ENCODE measurements at regions of chr3 and their contacts with region 1.

Region 1: DNA sequence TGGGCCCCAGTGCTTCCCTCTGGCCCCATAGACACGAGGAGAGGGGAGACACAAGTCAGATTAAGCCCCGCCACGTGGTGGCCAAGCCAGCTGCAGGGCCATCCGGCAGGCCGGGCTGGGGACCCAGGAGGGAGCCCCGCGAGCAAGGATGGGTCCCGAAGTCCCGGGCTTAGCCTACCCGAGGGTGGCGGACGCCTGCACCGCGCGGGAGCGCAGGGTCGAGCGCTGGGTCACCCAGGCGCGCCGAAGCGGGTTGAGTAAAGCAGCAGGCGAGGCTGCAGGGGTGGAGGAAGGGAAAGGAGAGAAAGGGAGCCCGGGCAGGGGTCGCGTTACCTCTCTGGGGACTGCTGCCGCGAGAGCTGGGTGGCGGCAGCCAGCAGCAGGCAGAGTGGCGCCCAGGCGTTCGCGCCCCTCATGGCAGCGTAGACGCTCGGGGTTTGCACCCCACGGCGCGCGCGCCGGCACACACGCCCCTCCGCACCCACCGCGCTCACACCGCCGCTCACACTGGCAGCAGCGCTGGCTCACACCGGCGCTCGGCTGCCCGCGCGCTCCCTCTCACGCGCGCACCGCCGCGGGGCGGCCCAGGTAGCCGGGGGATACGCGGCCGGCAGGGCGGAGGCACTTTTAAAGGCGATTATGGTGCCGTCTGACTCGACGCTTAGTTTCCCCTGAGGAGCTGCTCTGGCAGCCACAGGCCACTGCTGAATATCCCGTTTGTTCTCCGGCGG is at the start of gene PCOLCE2:
- DNase-seq: peak; percentile 16
- H3K4me3 ChIP-seq: peak within 1 kb of the TSS; percentile 25 to 64 (median 40)
- H3K27ac ChIP-seq: no peak within 1 kb of the TSS
- H3K4me1 ChIP-seq: peaks cover 8% of the 10 kb centered on the region
- H3K27me3 ChIP-seq: peaks cover 32 to 48% of the 10 kb centered on the region in 2 experiments
- CTCF ChIP-seq: no peak
- POLR2A ChIP-seq: no peak
- total RNA-seq, gene PCOLCE2: not detected in 2 replicates

Region 2: GRCh38 chr3:142963516-142964448 is 75.1 kb after region 1 on chr3 and contains the start of gene PAQR9:
- CTCF ChIA-PET with region 1: no interaction called
- POLR2A ChIA-PET with region 1: no interaction called
- dilution Hi-C with region 1: no loop called
- intact Hi-C with region 1: loop called (anchors 5 kb)
- DNase-seq: no peak
- H3K4me3 ChIP-seq: peak within 1 kb of the TSS; percentile 33 to 52 (median 35)
- H3K27ac ChIP-seq: no peak within 1 kb of the TSS
- H3K4me1 ChIP-seq: no peaks in the 10 kb centered on the region
- H3K27me3 ChIP-seq: peaks cover 48 to 79% of the 10 kb centered on the region in 2 experiments
- CTCF ChIP-seq: no peak
- POLR2A ChIP-seq: no peak
- total RNA-seq, gene PAQR9: not detected in 2 replicates

Region 3: DNA sequence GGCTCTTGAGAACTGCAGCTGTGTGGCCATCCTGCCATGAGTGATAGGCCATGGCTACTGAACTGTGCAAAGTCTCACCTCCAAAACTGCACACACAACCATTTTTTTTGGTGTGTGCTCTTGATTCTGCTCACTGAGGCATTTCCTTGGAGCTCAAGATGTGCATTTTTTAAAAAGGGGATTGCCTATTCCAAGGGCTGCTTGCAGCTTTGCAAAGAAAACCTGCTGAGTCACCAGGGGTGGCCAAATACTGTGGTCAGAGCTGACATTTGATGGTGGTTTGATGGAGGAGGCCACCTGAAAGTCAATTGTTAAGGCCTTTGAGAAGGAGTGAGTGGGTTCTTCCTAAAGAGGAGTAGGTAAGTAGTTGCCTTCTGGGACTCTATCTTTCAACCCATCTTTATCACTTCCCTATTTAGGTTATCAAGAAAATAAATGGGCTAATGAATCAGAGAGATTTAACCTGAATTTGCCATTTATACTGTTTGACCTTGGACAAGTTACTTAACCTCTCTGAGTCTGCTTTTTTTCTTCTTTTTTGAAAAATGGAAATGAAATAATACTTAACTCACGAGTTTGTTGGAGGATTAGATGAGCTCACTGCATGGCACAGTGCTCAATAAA is 318.8 kb after region 1 on chr3:
- CTCF ChIA-PET with region 1: no interaction called
- POLR2A ChIA-PET with region 1: no interaction called
- dilution Hi-C with region 1: no loop called
- intact Hi-C with region 1: no loop called
- DNase-seq: no peak
- H3K4me3 ChIP-seq: no peak overlapping the region
- H3K27ac ChIP-seq: no peak overlapping the region
- H3K4me1 ChIP-seq: no peaks in the 10 kb centered on the region
- H3K27me3 ChIP-seq: peaks cover 0 to 1% of the 10 kb centered on the region in 2 experiments
- CTCF ChIP-seq: no peak
- POLR2A ChIP-seq: no peak